B cell (primary cell): ENCODE measurements at regions of chr13 and their contacts with region 1.

Region 1: GRCh38 chr13:75549262-75550158 is at the start of gene UCHL3:
- DNase-seq: peak; percentile 98
- ATAC-seq: peak; percentile 92
- H3K4me3 ChIP-seq: peak within 1 kb of the TSS; percentile 67 to 96 (median 93)
- H3K4me3 Mint-ChIP-seq: peak within 1 kb of the TSS; percentile 95
- H3K27ac ChIP-seq: peak within 1 kb of the TSS; percentile 81 to 92
- H3K27ac Mint-ChIP-seq: peak within 1 kb of the TSS; percentile 99
- H3K4me1 ChIP-seq: peaks cover 13 to 14% of the 10 kb centered on the region in 2 donors
- H3K4me1 Mint-ChIP-seq: peaks cover 30% of the 10 kb centered on the region
- H3K27me3 ChIP-seq: no peaks in the 10 kb centered on the region
- H3K27me3 Mint-ChIP-seq: no peaks in the 10 kb centered on the region
- CTCF ChIP-seq: peak; percentile 89
- total RNA-seq, gene UCHL3: 13.5 and 16.8 TPM in 2 replicates

Region 2: GRCh38 chr13:75372517-75372916 is 177.0 kb before region 1 on chr13:
- CTCF ChIA-PET with region 1: interaction called, 13 read pairs
- POLR2A ChIA-PET with region 1: interaction called, 3 read pairs
- intact Hi-C with region 1: loop called (anchors 1 kb)
- DNase-seq: peak; percentile 48
- ATAC-seq: peak; percentile 58
- H3K4me3 ChIP-seq: no peak overlapping the region
- H3K4me3 Mint-ChIP-seq: no peak overlapping the region
- H3K27ac ChIP-seq: no peak overlapping the region
- H3K27ac Mint-ChIP-seq: no peak overlapping the region
- H3K4me1 ChIP-seq: no peaks in the 10 kb centered on the region
- H3K4me1 Mint-ChIP-seq: no peaks in the 10 kb centered on the region
- H3K27me3 ChIP-seq: no peaks in the 10 kb centered on the region
- H3K27me3 Mint-ChIP-seq: peaks cover 7% of the 10 kb centered on the region
- CTCF ChIP-seq: peak; percentile 77

Region 3: DNA sequence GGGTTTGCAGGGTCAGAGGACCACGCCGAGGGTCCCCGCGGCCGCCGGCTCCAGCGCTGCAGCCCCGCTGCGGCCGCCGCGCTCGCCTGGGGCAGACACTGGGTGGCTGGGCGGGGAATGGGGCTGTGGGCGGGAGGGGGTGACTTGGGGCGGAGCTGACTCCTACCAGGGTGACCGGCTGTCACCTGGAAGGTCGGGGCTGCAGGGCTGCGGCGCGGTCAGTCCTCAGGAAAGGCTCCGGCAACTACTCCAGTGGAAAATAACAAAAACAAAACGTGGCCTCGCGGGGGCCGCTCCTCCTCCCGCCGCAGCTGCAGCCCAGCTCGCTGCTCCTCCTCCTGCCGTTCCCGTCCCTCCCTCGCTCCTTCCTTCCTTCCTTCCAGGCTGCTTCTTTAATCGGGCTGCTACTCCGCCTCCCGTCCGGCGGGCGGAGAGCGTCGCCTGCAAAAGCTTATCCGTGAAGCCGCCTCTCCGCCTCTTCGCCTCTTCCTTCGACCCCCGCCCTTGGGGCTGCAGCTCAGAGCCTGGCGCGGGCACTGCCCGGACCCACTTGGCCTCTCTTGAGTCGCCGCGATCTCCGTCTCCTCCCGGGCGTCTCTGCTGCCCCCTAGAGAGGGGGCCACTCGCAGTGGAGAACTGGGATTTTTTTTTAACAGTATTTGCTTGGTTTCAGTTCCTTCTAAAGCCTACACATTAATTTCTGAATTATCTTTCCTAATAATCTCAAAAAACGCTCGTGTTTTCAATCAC is 67.3 kb before region 1 on chr13 and contains the start of gene TBC1D4:
- CTCF ChIA-PET with region 1: interaction called, 3 read pairs
- POLR2A ChIA-PET with region 1: no interaction called
- intact Hi-C with region 1: loop called (anchors 1 kb)
- DNase-seq: peak; percentile 81
- ATAC-seq: peak; percentile 85
- H3K4me3 ChIP-seq: peak within 1 kb of the TSS; percentile 31 to 83 (median 65)
- H3K4me3 Mint-ChIP-seq: peak within 1 kb of the TSS; percentile 100
- H3K27ac ChIP-seq: no peak within 1 kb of the TSS
- H3K27ac Mint-ChIP-seq: peak within 1 kb of the TSS; percentile 76
- H3K4me1 ChIP-seq: peaks cover 12 to 14% of the 10 kb centered on the region in 2 donors
- H3K4me1 Mint-ChIP-seq: peaks cover 15% of the 10 kb centered on the region
- H3K27me3 ChIP-seq: peaks cover 0 to 50% (median 31%) of the 10 kb centered on the region in 4 experiments
- H3K27me3 Mint-ChIP-seq: peaks cover 57% of the 10 kb centered on the region
- CTCF ChIP-seq: peak; percentile 90
- total RNA-seq, gene TBC1D4: 1.3 and 1.6 TPM in 2 replicates

Region 4: GRCh38 chr13:75537401-75538365 is 11.8 kb before region 1 on chr13 and contains the start of gene COMMD6:
- CTCF ChIA-PET with region 1: interaction called, 13 read pairs
- POLR2A ChIA-PET with region 1: interaction called, 3 read pairs
- intact Hi-C with region 1: loop called (anchors 1 kb)
- DNase-seq: peak; percentile 86
- ATAC-seq: peak; percentile 94
- H3K4me3 ChIP-seq: peak within 1 kb of the TSS; percentile 70 to 92 (median 86)
- H3K4me3 Mint-ChIP-seq: peak within 1 kb of the TSS; percentile 100
- H3K27ac ChIP-seq: peak within 1 kb of the TSS; percentile 56 to 75
- H3K27ac Mint-ChIP-seq: peak within 1 kb of the TSS; percentile 97
- H3K4me1 ChIP-seq: peaks cover 12 to 22% of the 10 kb centered on the region in 2 donors
- H3K4me1 Mint-ChIP-seq: peaks cover 43% of the 10 kb centered on the region
- H3K27me3 ChIP-seq: no peaks in the 10 kb centered on the region
- H3K27me3 Mint-ChIP-seq: no peaks in the 10 kb centered on the region
- CTCF ChIP-seq: peak; percentile 46
- total RNA-seq, gene COMMD6: 152 and 153 TPM in 2 replicates

Region 5: DNA sequence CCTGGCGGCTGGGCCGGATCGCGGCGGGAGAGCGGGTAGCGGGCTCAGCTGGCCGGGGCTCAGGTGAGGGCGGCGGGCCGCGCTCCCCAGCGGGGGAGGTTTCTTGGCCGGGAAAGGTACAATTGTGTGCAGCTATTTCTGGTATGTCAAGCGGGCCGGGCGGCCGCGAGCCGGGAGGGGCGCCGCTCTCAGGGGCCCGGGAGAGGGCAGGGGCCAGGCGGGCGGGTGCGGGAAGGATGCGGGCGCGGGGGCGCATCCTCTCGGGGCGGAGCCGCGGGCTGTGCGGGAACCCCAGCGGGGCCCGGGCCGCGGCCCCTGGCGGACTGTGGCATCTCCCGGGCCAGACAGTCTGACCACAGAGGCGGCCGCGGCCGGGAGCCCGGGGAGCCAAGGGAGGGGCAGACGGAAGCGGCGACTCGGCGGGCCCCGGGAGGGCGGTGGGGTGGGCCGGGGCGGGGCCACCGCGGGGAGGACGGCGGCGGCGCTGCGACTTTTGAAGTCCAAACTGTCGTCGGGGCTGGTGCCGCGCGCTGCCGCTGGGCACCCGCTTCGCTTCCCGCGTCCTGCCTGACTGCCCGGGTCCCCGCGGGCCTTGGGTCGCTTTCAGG is 86.4 kb after region 1 on chr13 and contains the start of gene LMO7:
- CTCF ChIA-PET with region 1: no interaction called
- POLR2A ChIA-PET with region 1: no interaction called
- intact Hi-C with region 1: loop called (anchors 5 kb)
- DNase-seq: no peak
- ATAC-seq: peak; percentile 68
- H3K4me3 ChIP-seq: peak within 1 kb of the TSS; percentile 48 to 86 (median 80)
- H3K4me3 Mint-ChIP-seq: peak within 1 kb of the TSS; percentile 87
- H3K27ac ChIP-seq: peak within 1 kb of the TSS in 1 of 2 donors; percentile 39
- H3K27ac Mint-ChIP-seq: peak within 1 kb of the TSS; percentile 71
- H3K4me1 ChIP-seq: peaks cover 5 to 14% of the 10 kb centered on the region in 2 donors
- H3K4me1 Mint-ChIP-seq: peaks cover 11% of the 10 kb centered on the region
- H3K27me3 ChIP-seq: peaks cover 0 to 5% (median 0%) of the 10 kb centered on the region in 4 experiments
- H3K27me3 Mint-ChIP-seq: peaks cover 9% of the 10 kb centered on the region
- CTCF ChIP-seq: no peak
- total RNA-seq, gene LMO7: 17.4 and 21.5 TPM in 2 replicates